ENCODE measurements at regions of chr1 and their contacts with region 1.

Region 1: GRCh38 chr1:88935522-88936222 is 44.3 kb upstream of the GTF2B start:
- DNase-seq: peak; percentile 51
- ATAC-seq: peak; percentile 55; the same call in 1 of the 2 replicates
- H3K4me3 ChIP-seq: no peak overlapping the region
- H3K27ac ChIP-seq: no peak overlapping the region
- H3K4me1 ChIP-seq: no peaks in the 10 kb centered on the region
- H3K27me3 ChIP-seq: no peaks in the 10 kb centered on the region
- CTCF ChIP-seq: peak; percentile 79

Region 2: GRCh38 chr1:88722492-88722891 is 213.2 kb before region 1 on chr1:
- CTCF ChIA-PET with region 1: no interaction called
- POLR2A ChIA-PET with region 1: no interaction called
- intact Hi-C with region 1: no loop called
- DNase-seq: no peak
- ATAC-seq: no peak
- H3K4me3 ChIP-seq: no peak overlapping the region
- H3K27ac ChIP-seq: no peak overlapping the region
- H3K4me1 ChIP-seq: no peaks in the 10 kb centered on the region
- H3K27me3 ChIP-seq: no peaks in the 10 kb centered on the region
- CTCF ChIP-seq: no peak

Region 3: GRCh38 chr1:88799491-88799890 is 136.2 kb before region 1 on chr1:
- CTCF ChIA-PET with region 1: no interaction called
- POLR2A ChIA-PET with region 1: no interaction called
- intact Hi-C with region 1: no loop called
- DNase-seq: no peak
- ATAC-seq: no peak
- H3K4me3 ChIP-seq: no peak overlapping the region
- H3K27ac ChIP-seq: no peak overlapping the region
- H3K4me1 ChIP-seq: peaks cover 9% of the 10 kb centered on the region
- H3K27me3 ChIP-seq: no peaks in the 10 kb centered on the region
- CTCF ChIP-seq: no peak

Region 4: GRCh38 chr1:88961647-88962275 is 26.1 kb after region 1 on chr1:
- CTCF ChIA-PET with region 1: interaction called, 4 read pairs
- POLR2A ChIA-PET with region 1: no interaction called
- intact Hi-C with region 1: loop called (anchors 2 kb)
- DNase-seq: peak; percentile 66
- ATAC-seq: peak; percentile 94
- H3K4me3 ChIP-seq: no peak overlapping the region
- H3K27ac ChIP-seq: peak overlapping the region; percentile 21
- H3K4me1 ChIP-seq: peaks cover 23% of the 10 kb centered on the region
- H3K27me3 ChIP-seq: no peaks in the 10 kb centered on the region
- CTCF ChIP-seq: no peak

Region 5: DNA sequence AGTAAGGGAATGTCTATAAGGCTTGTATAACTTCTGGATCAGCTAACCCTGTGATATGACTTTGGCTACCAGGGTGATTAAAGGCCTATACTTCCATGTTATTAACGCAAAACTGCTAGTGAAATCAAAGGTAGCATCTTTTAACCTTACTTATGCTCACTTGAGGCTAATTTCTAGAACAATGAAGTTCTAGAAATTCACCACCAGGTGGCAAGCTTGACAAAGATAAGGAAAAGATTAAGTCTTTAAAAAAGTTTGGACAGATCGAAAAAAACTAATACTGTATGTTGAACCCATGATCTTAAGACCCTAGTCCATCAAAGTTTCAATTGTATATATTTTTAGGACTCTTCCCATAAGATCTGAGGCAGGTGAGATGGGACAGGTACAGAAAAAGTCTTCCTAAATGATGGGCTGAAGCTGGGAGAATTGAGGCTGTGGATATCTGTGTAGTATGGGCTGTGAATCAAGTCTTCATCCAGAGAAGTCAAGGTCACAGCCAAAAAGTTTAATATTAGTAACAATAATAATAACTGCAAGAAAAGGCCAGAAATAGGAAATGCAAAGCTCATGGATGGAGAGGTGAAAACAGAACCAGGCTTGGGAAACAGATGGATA is 38.0 kb after region 1 on chr1:
- CTCF ChIA-PET with region 1: no interaction called
- POLR2A ChIA-PET with region 1: no interaction called
- intact Hi-C with region 1: loop called (anchors 5 kb)
- DNase-seq: peak; percentile 71
- ATAC-seq: 0 out of 2 replicates have a peak, but pooled peaks have one; percentile 29
- H3K4me3 ChIP-seq: no peak overlapping the region
- H3K27ac ChIP-seq: no peak overlapping the region
- H3K4me1 ChIP-seq: no peaks in the 10 kb centered on the region
- H3K27me3 ChIP-seq: no peaks in the 10 kb centered on the region
- CTCF ChIP-seq: peak; percentile 82

Region 6: DNA sequence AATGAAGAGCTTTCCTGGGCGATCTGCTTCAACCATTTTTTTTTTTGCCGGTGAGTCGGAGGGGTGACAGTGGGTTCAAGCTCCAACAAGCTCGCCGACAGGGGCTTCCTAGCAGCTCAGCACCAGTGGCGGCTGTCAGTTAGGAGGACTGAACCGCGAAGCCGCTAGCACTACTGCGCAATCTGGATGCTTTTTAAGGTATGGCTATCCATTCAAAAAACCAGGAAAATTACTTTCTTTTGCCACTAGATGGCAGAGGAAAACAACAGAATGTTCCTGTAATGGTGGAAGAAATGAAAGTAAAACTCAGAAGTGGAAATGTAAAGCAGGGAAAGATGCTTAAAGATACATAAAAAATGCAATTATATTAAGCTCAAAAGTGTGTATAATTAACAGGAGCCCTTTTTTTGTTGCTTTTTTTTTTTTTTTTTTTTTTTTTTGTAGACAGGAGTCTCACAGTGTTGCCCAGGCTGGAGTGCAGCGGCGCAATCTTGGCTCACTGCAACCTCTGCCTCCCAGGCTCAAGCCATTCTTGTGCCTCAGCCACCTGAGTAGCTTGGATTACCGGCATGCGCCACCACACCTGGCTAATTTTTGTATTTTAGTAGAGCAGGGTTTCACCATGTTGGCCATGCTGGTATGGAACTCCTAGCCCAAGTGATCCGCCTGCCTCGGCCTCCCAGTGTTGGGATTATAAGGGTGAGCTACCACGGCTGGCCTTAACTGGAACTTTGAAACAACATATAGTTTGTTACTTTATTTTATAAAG is 48.3 kb after region 1 on chr1:
- CTCF ChIA-PET with region 1: no interaction called
- POLR2A ChIA-PET with region 1: no interaction called
- intact Hi-C with region 1: loop called (anchors 2 kb)
- DNase-seq: peak; percentile 84
- ATAC-seq: 0 out of 2 replicates have a peak, but pooled peaks have one; percentile 5
- H3K4me3 ChIP-seq: peak overlapping the region; percentile 25; the same call in 1 of the 2 replicates
- H3K27ac ChIP-seq: peak overlapping the region; percentile 86; the same call in 1 of the 2 replicates
- H3K4me1 ChIP-seq: peaks cover 48% of the 10 kb centered on the region
- H3K27me3 ChIP-seq: no peaks in the 10 kb centered on the region
- CTCF ChIP-seq: peak; percentile 69

Region 7: DNA sequence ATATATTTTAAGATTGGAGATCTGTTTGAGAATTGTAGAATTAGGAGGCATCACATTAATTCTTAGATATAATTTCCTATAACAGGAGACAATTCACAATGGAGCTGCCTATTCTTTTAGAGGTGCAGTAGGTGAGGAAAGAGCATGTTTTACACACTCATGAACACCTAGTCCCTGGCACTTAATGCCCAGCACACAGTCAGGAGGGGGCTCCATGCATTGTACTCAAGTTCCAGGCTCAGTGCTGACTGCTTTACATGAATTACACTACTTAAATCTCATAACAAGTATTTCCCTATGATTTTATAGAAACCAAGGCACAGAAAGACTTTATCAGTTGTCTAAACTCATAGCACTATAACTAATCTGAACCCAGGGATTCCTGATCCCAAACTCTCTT is 87.4 kb after region 1 on chr1:
- CTCF ChIA-PET with region 1: no interaction called
- POLR2A ChIA-PET with region 1: no interaction called
- intact Hi-C with region 1: no loop called
- DNase-seq: no peak
- ATAC-seq: no peak
- H3K4me3 ChIP-seq: peak overlapping the region; percentile 63
- H3K27ac ChIP-seq: peak overlapping the region; percentile 68
- H3K4me1 ChIP-seq: peaks cover 24% of the 10 kb centered on the region
- H3K27me3 ChIP-seq: no peaks in the 10 kb centered on the region
- CTCF ChIP-seq: no peak

Region 8: GRCh38 chr1:89060091-89060490 is 124.4 kb after region 1 on chr1:
- CTCF ChIA-PET with region 1: no interaction called
- POLR2A ChIA-PET with region 1: no interaction called
- intact Hi-C with region 1: no loop called
- DNase-seq: peak; percentile 11
- ATAC-seq: no peak
- H3K4me3 ChIP-seq: no peak overlapping the region
- H3K27ac ChIP-seq: no peak overlapping the region
- H3K4me1 ChIP-seq: 0 out of 2 replicates have a peak, but pooled peaks cover 5% of the 10 kb centered on the region
- H3K27me3 ChIP-seq: no peaks in the 10 kb centered on the region
- CTCF ChIP-seq: no peak

Region 9: GRCh38 chr1:89454845-89455521 is 519.3 kb after region 1 on chr1:
- CTCF ChIA-PET with region 1: no interaction called
- POLR2A ChIA-PET with region 1: no interaction called
- intact Hi-C with region 1: loop called (anchors 1 kb)
- DNase-seq: peak; percentile 81
- ATAC-seq: peak; percentile 89
- H3K4me3 ChIP-seq: peak overlapping the region; percentile 10; the same call in 1 of the 2 replicates
- H3K27ac ChIP-seq: no peak overlapping the region
- H3K4me1 ChIP-seq: peaks cover 8% of the 10 kb centered on the region
- H3K27me3 ChIP-seq: no peaks in the 10 kb centered on the region
- CTCF ChIP-seq: peak; percentile 70

Measured in PC-3 (cell line).